ENCODE measurements at regions of chr11 and their contacts with region 1.

Region 1: GRCh38 chr11:47213985-47214564 is 699 bp upstream of the DDB2 start:
- DNase-seq: peak; percentile 81
- ATAC-seq: peak; percentile 80
- H3K4me3 Mint-ChIP-seq: peak overlapping the region; percentile 99
- H3K27ac Mint-ChIP-seq: peak overlapping the region; percentile 100
- H3K4me1 Mint-ChIP-seq: peaks cover 32% of the 10 kb centered on the region
- H3K27me3 Mint-ChIP-seq: peaks cover 2% of the 10 kb centered on the region

Region 2: GRCh38 chr11:46972343-46972742 is 241.7 kb before region 1 on chr11:
- POLR2A ChIA-PET with region 1: no interaction called
- DNase-seq: no peak
- ATAC-seq: no peak
- H3K4me3 Mint-ChIP-seq: no peak overlapping the region
- H3K27ac Mint-ChIP-seq: peak overlapping the region; percentile 19
- H3K4me1 Mint-ChIP-seq: no peaks in the 10 kb centered on the region
- H3K27me3 Mint-ChIP-seq: no peaks in the 10 kb centered on the region

Region 3: GRCh38 chr11:47176328-47177228 is 37.5 kb before region 1 on chr11 and contains the start of gene ARFGAP2:
- POLR2A ChIA-PET with region 1: interaction called, 53 read pairs
- DNase-seq: peak; percentile 98
- ATAC-seq: peak; percentile 94
- H3K4me3 Mint-ChIP-seq: peak within 1 kb of the TSS; percentile 98
- H3K27ac Mint-ChIP-seq: peak within 1 kb of the TSS; percentile 100
- H3K4me1 Mint-ChIP-seq: peaks cover 30% of the 10 kb centered on the region
- H3K27me3 Mint-ChIP-seq: no peaks in the 10 kb centered on the region
- total RNA-seq, gene ARFGAP2: 108 to 113 TPM

Region 4: GRCh38 chr11:47225552-47226400 is 11.7 kb after region 1 on chr11:
- POLR2A ChIA-PET with region 1: interaction called, 12 read pairs
- DNase-seq: no peak
- ATAC-seq: peak; percentile 95
- H3K4me3 Mint-ChIP-seq: peak overlapping the region; percentile 60
- H3K27ac Mint-ChIP-seq: peak overlapping the region; percentile 63
- H3K4me1 Mint-ChIP-seq: peaks cover 28% of the 10 kb centered on the region
- H3K27me3 Mint-ChIP-seq: no peaks in the 10 kb centered on the region

Region 5: DNA sequence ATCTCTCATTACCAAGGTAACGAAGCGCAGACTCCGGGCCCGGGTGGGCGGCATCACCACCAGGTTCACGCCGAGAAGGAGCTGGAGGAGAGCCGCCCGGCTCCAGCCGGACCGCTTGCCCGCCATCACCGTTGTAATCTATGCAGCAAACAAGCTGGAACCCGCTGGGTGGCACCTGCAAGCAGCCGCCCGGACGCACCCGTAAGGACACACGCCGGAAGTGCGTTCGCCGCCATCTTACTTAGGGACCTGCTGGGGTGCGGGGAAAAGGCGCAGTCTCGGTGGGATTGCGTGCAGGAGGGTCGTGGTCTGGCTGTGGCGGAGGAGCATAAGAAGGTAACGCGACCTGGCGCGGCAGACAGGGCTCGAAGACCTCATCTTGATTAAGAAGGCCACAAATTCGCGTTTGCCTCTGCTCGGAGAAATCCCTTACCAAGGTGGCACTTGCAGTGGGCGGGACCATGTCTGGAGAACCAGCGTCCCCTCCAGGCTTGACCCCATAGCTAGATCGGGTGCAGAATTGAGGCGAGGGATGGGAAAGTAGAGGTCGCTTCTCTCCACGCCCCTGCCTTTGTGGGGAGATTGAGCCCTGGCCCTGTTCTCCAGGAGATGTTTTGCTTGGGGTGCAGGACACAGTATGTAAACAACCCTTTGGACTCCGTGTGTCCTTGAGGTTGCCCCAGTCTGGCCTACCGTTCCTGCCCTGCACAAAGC is 34.7 kb after region 1 on chr11 and contains the start of gene ACP2:
- POLR2A ChIA-PET with region 1: interaction called, 59 read pairs
- DNase-seq: peak; percentile 89
- ATAC-seq: peak; percentile 97
- H3K4me3 Mint-ChIP-seq: peak within 1 kb of the TSS; percentile 98
- H3K27ac Mint-ChIP-seq: peak within 1 kb of the TSS; percentile 98
- H3K4me1 Mint-ChIP-seq: peaks cover 19% of the 10 kb centered on the region
- H3K27me3 Mint-ChIP-seq: no peaks in the 10 kb centered on the region
- total RNA-seq, gene ACP2: 26.5 to 31.1 TPM

Region 6: DNA sequence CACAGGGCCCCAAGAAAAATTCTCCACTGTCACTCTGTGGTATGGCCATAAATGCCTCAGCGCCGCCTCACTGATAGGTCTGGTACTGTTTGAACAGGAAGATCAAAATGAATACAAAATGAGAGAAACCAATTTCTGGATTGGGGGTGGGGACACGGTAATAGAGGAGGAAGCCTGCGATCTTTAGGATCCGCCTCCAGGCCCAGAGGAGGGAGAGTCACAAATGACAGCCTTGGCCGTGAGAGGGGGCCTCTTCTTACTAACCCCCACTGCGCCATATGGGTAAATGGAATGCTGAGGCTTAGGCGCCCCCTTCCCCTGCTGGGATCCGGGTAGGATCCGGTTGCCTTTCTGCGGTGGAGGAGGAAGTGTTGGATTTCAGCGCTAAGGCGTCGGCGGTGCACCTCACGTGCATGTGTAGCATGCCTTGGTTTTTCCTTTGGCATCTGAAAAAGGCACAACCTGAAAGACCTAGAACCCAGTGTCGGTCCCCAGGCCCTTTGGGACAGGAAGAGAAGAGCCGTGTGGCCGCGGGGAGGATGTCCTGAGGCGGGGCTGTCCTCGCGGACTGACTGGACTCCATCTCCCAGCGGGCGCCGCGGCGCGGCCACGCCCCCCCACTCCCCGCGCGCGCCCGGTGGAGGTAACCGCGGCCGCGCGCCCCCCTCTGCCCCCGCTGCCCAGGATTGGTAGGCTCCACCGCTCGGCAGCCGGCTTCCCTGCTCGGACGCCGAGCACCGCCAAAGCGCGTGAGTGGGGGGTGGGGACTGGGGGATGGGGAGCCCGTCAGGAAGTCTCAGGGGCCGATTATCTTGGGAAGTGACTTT is 55.1 kb after region 1 on chr11:
- POLR2A ChIA-PET with region 1: interaction called, 26 read pairs
- DNase-seq: peak; percentile 91
- ATAC-seq: peak; percentile 46
- H3K4me3 Mint-ChIP-seq: peak overlapping the region; percentile 92
- H3K27ac Mint-ChIP-seq: peak overlapping the region; percentile 100
- H3K4me1 Mint-ChIP-seq: peaks cover 48% of the 10 kb centered on the region
- H3K27me3 Mint-ChIP-seq: no peaks in the 10 kb centered on the region

Region 7: DNA sequence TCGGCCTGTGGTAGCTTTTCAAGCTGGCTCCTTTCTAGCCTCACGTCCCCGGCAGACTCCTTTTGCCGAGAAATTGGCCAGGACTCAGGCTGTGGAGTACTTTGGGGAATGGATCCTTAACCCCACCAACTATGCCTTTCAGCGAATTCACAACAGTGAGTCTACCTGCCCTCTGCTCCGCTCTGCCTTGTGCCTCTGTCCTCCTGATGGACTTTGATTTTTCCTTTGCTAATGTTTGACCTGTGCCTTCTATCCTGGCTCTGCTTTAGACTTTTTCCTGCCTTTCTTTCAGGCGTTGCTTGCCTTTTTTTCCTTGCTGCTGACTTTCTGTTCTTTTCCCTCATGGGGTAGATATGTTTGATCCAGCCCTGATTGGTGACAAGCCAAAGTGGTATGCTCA is 68.4 kb after region 1 on chr11:
- POLR2A ChIA-PET with region 1: no interaction called
- DNase-seq: no peak
- ATAC-seq: no peak
- H3K4me3 Mint-ChIP-seq: no peak overlapping the region
- H3K27ac Mint-ChIP-seq: no peak overlapping the region
- H3K4me1 Mint-ChIP-seq: peaks cover 3% of the 10 kb centered on the region
- H3K27me3 Mint-ChIP-seq: no peaks in the 10 kb centered on the region

Measured in activated naive CD8-positive, alpha-beta T cell treated with anti-CD3 and anti-CD28 coated beads, Interleukin-2, amount 10 ng/mL, durations not matched to agents 7 days and 5 days (primary cell).